Activated CD8-positive, alpha-beta T cell treated with anti-CD3 and anti-CD28 coated beads, Interleukin-2, amount 10 ng/mL, durations not matched to agents 7 days and 5 days (primary cell): ENCODE measurements at regions of chr10 and their contacts with region 1.

Region 1: GRCh38 chr10:97714048-97714371 is 480 bp downstream of the MARVELD1 start:
- DNase-seq: peak; percentile 64
- ATAC-seq: peak; percentile 86
- H3K4me3 Mint-ChIP-seq: peak overlapping the region; percentile 98
- H3K27ac Mint-ChIP-seq: peak overlapping the region; percentile 86
- H3K4me1 Mint-ChIP-seq: peaks cover 20% of the 10 kb centered on the region
- H3K27me3 Mint-ChIP-seq: peaks cover 28% of the 10 kb centered on the region

Region 2: DNA sequence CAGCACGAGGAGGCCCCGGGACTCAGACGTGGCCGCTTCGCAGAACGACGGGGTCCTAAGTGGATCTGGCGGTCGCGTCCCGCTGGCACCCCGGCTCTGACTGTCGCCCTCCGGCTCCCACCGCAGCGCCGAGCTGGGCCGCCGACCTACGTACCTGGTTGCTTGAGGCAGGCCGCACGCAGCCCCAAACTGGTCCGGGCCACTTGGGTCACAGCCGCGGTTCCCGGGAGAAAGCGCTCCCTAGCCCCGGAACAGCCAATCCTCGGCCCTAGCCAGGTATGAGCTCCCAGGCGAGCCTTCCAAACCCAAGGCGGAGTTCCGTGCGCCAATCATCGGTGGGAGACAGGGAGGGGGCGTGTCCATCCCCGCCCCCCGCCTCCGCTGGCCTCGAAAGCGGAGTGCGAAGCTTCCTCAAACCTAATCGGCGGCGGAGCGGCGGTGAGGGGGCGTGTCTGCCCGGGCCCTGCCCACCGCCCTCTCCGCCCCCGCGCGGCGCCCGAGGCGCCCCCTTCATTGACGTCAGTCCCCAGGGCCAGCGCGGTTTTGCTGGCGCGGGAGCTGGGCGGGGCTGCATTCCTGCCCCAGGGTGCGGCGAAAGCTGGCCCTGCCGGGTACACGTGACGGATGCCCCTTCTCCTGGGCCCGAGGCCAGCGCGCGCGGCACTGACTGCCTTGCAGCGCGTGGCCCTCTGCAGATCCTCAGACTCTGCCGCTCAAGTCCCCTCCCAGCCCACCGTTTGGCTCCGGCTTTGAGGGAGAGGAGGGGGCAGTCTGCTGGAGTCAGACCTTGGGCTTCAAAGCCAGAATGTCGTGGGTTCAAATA is 26.8 kb before region 1 on chr10 and contains the start of gene AVPI1:
- CTCF ChIA-PET with region 1: interaction called, 22 read pairs
- POLR2A ChIA-PET with region 1: interaction called, 3 read pairs
- DNase-seq: peak; percentile 95
- ATAC-seq: peak; percentile 97
- H3K4me3 Mint-ChIP-seq: peak within 1 kb of the TSS; percentile 82
- H3K27ac Mint-ChIP-seq: peak within 1 kb of the TSS; percentile 74
- H3K4me1 Mint-ChIP-seq: peaks cover 17% of the 10 kb centered on the region
- H3K27me3 Mint-ChIP-seq: no peaks in the 10 kb centered on the region
- total RNA-seq, gene AVPI1: 1.1 to 1.7 TPM

Region 3: GRCh38 chr10:97731346-97732051 is 17.5 kb after region 1 on chr10:
- CTCF ChIA-PET with region 1: interaction called, 171 read pairs
- POLR2A ChIA-PET with region 1: interaction called, 5 read pairs
- DNase-seq: peak; percentile 61
- ATAC-seq: no peak
- H3K4me3 Mint-ChIP-seq: no peak overlapping the region
- H3K27ac Mint-ChIP-seq: no peak overlapping the region
- H3K4me1 Mint-ChIP-seq: peaks cover 6% of the 10 kb centered on the region
- H3K27me3 Mint-ChIP-seq: peaks cover 4% of the 10 kb centered on the region

Region 4: GRCh38 chr10:97736902-97737769 is 23.1 kb after region 1 on chr10 and contains the start of gene ZFYVE27:
- CTCF ChIA-PET with region 1: interaction called, 171 read pairs
- POLR2A ChIA-PET with region 1: interaction called, 5 read pairs
- DNase-seq: peak; percentile 97
- ATAC-seq: peak; percentile 86
- H3K4me3 Mint-ChIP-seq: peak within 1 kb of the TSS; percentile 90
- H3K27ac Mint-ChIP-seq: peak within 1 kb of the TSS; percentile 95
- H3K4me1 Mint-ChIP-seq: peaks cover 46% of the 10 kb centered on the region
- H3K27me3 Mint-ChIP-seq: peaks cover 4% of the 10 kb centered on the region
- total RNA-seq, gene ZFYVE27: 23.8 to 27.3 TPM